Calu3 (cell line): ENCODE measurements at regions of chr19 and their contacts with region 1.

Region 1: GRCh38 chr19:15759962-15760565 is 22.3 kb downstream of the OR10H3 start:
- DNase-seq: peak; percentile 34
- H3K4me3 Mint-ChIP-seq: peak overlapping the region; percentile 58
- H3K27ac Mint-ChIP-seq: no peak overlapping the region
- H3K4me1 Mint-ChIP-seq: peaks cover 7% of the 10 kb centered on the region
- H3K27me3 Mint-ChIP-seq: peaks cover 47% of the 10 kb centered on the region
- CTCF ChIP-seq: peak; percentile 32

Region 2: DNA sequence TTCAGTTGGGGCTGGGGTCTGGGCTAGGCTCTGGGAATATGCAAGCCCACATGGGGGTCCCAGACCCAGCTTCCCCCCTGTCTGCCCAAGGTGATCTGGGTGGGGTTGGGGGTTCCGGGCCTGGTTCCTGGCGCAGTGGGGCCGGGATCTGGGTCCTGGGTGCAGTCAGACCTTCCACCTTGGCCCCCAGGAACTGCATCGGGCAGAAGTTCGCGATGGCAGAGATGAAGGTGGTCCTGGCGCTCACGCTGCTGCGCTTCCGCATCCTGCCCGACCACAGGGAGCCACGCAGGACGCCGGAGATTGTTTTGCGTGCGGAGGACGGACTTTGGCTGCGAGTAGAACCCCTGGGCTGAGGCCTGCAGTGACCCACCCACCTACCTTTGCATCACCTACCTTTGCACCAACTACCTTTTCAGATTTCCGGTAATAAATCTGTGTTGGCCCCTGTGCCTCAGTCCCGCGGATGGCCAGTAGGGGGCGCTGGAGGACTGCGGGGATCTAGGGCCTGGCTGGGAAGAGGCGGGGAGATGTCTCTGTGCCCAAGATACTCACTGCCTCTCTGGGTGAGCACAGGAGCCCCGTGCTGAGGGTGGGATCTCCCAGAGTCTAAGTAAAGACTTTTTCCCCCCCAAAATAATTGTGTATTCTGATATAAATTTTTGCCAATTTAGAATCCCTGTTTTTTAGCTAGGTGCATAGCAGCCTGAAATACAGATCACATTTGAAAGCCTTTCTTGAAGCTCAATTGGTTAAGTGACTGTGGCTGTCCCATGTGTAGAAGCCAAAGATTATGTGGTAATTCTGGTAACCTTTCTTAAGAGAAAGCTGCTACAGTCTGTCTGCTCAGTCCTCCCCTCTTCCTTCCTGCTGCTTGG is 130.8 kb before region 1 on chr19:
- CTCF ChIA-PET with region 1: no interaction called
- intact Hi-C with region 1: loop called (anchors 5 kb)
- DNase-seq: peak; percentile 87
- H3K4me3 Mint-ChIP-seq: no peak overlapping the region
- H3K27ac Mint-ChIP-seq: no peak overlapping the region
- H3K4me1 Mint-ChIP-seq: peaks cover 5% of the 10 kb centered on the region
- H3K27me3 Mint-ChIP-seq: no peaks in the 10 kb centered on the region
- CTCF ChIP-seq: peak; percentile 77

Region 3: DNA sequence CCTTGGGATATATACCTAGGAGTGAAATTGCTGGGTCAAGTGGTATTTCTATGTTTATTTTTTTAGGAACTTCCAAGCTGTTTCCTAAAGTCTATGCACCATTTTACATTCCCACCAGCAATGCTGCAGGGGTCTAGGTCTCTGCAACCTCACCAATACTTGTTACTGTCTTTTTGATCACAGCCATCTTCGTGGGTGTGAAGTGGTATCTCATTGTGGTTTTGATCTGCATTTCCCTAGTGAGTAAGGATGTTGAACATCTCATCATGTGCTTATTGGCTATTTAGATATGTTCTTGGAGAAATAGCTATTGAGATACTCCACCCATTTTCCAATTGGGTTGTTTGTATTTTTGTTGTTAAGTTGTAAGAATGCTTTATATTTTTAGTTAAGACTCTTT is 29.5 kb before region 1 on chr19:
- CTCF ChIA-PET with region 1: no interaction called
- intact Hi-C with region 1: no loop called
- DNase-seq: no peak
- H3K4me3 Mint-ChIP-seq: no peak overlapping the region
- H3K27ac Mint-ChIP-seq: no peak overlapping the region
- H3K4me1 Mint-ChIP-seq: no peaks in the 10 kb centered on the region
- H3K27me3 Mint-ChIP-seq: peaks cover 61% of the 10 kb centered on the region
- CTCF ChIP-seq: no peak